ENCODE measurements at regions of chr4 and their contacts with region 1.

Region 1: DNA sequence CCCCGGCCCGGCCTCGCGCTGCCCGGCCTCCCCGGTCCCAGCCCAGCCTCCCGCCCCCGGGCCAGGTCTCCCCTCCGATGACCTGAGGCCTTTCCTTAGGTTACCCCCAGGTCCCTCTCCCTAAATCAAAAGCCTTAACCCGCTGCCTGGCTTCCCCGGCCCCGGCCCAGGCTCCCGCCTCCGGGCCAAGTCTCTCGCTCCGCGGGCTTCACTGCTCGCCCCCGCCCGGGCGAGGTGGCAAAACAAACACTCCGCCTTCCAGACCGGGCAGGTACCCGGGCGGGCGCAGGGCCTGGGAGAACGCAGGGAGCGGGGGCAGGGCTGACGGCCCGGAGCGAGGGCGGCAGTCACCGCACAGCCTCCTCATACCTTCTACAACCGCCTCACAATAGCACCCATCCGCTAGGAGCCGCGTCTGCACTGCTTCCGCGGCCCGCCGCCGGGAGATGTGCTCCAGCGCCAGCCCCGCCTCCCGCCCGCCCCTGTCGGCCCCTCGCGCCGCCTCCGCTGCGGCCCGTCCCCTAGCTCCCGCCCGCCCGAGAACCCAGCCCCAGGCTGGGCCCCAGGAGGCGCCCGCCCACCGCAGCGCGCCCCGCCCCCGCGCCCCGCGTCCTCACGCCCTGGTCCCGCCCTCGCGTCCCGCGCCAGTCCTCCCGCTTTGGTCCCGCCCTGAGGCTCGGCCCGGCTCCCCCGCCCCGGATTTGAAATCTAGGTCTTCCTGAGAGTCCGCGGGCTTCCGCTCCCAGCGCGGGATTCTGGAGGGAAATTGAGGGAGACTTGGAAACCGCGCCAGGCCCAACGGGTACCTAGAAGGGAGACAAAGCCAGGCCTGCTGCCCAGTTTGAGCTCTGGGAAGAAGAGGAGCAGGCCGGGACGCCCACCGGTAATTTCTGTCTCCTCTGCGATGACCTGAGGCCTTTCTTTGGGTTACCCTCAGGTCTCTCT is at the starts of genes CASP3 and PRIMPOL:
- DNase-seq: peak; percentile 95
- H3K4me3 ChIP-seq: peak within 1 kb of the TSS; percentile 78 to 80 (median 79)
- H3K27ac ChIP-seq: peak within 1 kb of the TSS; percentile 97
- H3K4me1 ChIP-seq: peaks cover 19% of the 10 kb centered on the region
- H3K27me3 ChIP-seq: no peaks in the 10 kb centered on the region
- CTCF ChIP-seq: peak in 1 of 2 donors; percentile 55
- total RNA-seq, gene CASP3: 34.2 to 43.0 TPM
- total RNA-seq, gene PRIMPOL: 8.0 to 19.9 TPM

Region 2: GRCh38 chr4:184263910-184264732 is 385.2 kb before region 1 on chr4:
- CTCF ChIA-PET with region 1: no interaction called
- dilution Hi-C with region 1: no loop called
- in situ Hi-C with region 1: no loop called
- intact Hi-C with region 1: loop called (anchors 1 kb)
- DNase-seq: peak; percentile 79
- H3K4me3 ChIP-seq: no peak overlapping the region
- H3K27ac ChIP-seq: no peak overlapping the region
- H3K4me1 ChIP-seq: peaks cover 26% of the 10 kb centered on the region
- H3K27me3 ChIP-seq: peaks cover under 1% of the 10 kb centered on the region
- CTCF ChIP-seq: peak; percentile 79 to 80

Region 3: DNA sequence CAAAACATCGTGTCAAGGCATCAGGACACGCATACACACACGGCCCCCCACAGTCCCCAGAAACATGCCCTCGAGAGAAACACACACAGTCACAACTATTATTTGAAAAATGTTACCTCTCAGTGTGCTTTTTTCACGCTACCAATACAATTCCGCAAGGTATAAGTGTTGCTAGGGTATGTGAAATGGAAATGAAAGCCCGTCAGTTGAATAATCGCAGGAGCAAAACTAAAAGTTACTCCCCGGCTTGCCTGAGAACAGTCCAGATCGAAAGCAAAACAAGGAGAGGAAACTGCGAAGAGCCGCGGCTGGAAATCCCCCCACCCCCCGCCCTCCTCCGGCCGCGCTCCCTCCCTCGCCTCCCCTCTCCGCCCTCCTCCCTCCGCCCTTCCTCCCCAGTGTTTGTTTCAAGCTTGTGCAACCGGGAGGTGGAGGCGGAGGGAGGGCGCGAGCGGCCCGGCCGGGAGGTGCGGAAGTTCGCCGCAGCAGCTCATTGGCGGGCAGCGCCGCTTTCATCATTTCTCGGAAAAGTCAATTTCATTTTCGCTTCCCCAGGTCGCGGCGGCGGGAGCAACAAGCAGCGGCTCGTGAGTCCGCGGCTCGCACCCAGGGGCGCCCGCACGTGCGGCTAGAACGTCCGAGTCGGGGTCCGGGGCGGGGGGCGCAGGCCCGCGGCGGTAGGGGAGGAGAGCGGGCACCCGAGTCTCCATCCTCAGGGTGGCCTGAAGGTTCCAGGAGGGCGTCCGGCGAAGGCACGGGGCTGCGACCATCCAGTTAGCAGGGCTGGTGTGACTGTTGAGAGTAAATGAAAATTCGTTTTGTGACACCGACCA is 174.8 kb before region 1 on chr4 and contains the start of gene IRF2:
- CTCF ChIA-PET with region 1: no interaction called
- dilution Hi-C with region 1: no loop called
- in situ Hi-C with region 1: no loop called
- intact Hi-C with region 1: loop called (anchors 5 kb)
- DNase-seq: peak; percentile 98
- H3K4me3 ChIP-seq: peak within 1 kb of the TSS; percentile 90 to 99 (median 90)
- H3K27ac ChIP-seq: peak within 1 kb of the TSS; percentile 96
- H3K4me1 ChIP-seq: peaks cover 13% of the 10 kb centered on the region
- H3K27me3 ChIP-seq: no peaks in the 10 kb centered on the region
- CTCF ChIP-seq: no peak
- total RNA-seq, gene IRF2: 22.0 to 23.3 TPM

Region 4: GRCh38 chr4:184688447-184688846 is 39.1 kb after region 1 on chr4:
- CTCF ChIA-PET with region 1: no interaction called
- dilution Hi-C with region 1: no loop called
- in situ Hi-C with region 1: no loop called
- intact Hi-C with region 1: loop called (anchors 2 kb)
- DNase-seq: peak; percentile 92
- H3K4me3 ChIP-seq: no peak overlapping the region
- H3K27ac ChIP-seq: peak overlapping the region; percentile 69
- H3K4me1 ChIP-seq: peaks cover 23% of the 10 kb centered on the region
- H3K27me3 ChIP-seq: no peaks in the 10 kb centered on the region
- CTCF ChIP-seq: no peak

Region 5: DNA sequence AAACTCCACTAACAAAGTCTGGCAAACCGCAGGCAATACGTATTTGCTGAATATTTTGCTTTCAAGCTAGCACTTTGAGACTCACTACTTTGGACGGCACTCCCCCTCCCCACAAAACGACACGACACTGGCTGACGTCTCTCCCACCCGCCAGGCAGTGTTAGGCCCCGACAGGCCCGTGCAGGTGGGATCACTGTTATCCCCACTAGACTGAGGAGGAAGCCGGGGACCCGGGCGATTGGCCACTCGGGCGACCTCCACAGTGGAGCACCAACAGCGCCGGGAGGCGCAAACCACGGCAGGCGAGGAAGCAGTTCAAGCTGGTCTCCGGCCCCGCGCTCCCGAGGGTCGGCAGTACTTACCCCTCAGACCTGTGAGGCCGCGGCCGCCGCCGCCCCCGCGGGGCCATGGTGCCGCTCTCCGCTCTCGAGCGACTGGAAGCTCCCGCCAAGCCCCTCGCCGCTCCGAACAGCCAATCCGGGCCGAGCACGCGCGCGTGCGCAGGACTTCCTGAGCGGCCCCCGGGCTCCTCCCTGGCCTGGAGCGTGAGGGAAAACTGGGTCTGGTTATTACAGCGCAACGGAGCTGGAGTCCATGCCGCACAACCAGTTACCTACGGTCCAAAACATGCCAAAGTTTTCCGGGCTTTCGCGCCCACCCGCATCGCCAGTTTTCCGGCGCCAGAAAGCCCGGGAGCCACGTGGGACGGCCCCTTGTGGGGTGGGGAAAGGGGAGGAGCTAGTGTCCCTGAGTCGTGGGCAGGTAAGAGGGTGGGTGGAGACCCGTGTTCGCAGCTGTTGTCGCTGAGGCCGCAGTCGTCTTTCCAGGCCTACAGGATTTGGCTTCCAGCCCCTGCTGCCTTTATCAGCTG is 84.6 kb after region 1 on chr4 and contains the start of gene CENPU:
- CTCF ChIA-PET with region 1: interaction called, 7 read pairs
- dilution Hi-C with region 1: no loop called
- in situ Hi-C with region 1: no loop called
- intact Hi-C with region 1: loop called (anchors 1 kb)
- DNase-seq: peak; percentile 98
- H3K4me3 ChIP-seq: peak within 1 kb of the TSS; percentile 57 to 98 (median 94)
- H3K27ac ChIP-seq: peak within 1 kb of the TSS; percentile 96
- H3K4me1 ChIP-seq: peaks cover 31% of the 10 kb centered on the region
- H3K27me3 ChIP-seq: no peaks in the 10 kb centered on the region
- CTCF ChIP-seq: no peak
- total RNA-seq, gene CENPU: 4.5 to 38.3 TPM

Region 6: GRCh38 chr4:184911310-184911709 is 262.0 kb after region 1 on chr4:
- CTCF ChIA-PET with region 1: no interaction called
- dilution Hi-C with region 1: no loop called
- in situ Hi-C with region 1: no loop called
- intact Hi-C with region 1: loop called (anchors 5 kb)
- DNase-seq: peak; percentile 97
- H3K4me3 ChIP-seq: no peak overlapping the region
- H3K27ac ChIP-seq: peak overlapping the region; percentile 25
- H3K4me1 ChIP-seq: peaks cover 21% of the 10 kb centered on the region
- H3K27me3 ChIP-seq: no peaks in the 10 kb centered on the region
- CTCF ChIP-seq: no peak

Region 7: GRCh38 chr4:185096032-185096653 is 446.8 kb after region 1 on chr4:
- CTCF ChIA-PET with region 1: interaction called, 6 read pairs
- dilution Hi-C with region 1: no loop called
- in situ Hi-C with region 1: no loop called
- intact Hi-C with region 1: loop called (anchors 10 kb)
- DNase-seq: peak; percentile 16
- H3K4me3 ChIP-seq: no peak overlapping the region
- H3K27ac ChIP-seq: no peak overlapping the region
- H3K4me1 ChIP-seq: no peaks in the 10 kb centered on the region
- H3K27me3 ChIP-seq: no peaks in the 10 kb centered on the region
- CTCF ChIP-seq: peak; percentile 41 to 62

Measured in mammary epithelial cell (primary cell).